ENCODE measurements at regions of chr11 and their contacts with region 1.

Region 1: GRCh38 chr11:269146-269890 is 8.9 kb upstream of the NLRP6 start:
- DNase-seq: peak; percentile 53
- H3K4me3 Mint-ChIP-seq: peak overlapping the region; percentile 88
- H3K27ac Mint-ChIP-seq: peak overlapping the region; percentile 97
- H3K4me1 Mint-ChIP-seq: peaks cover 31% of the 10 kb centered on the region
- H3K27me3 Mint-ChIP-seq: peaks cover 6% of the 10 kb centered on the region

Region 2: DNA sequence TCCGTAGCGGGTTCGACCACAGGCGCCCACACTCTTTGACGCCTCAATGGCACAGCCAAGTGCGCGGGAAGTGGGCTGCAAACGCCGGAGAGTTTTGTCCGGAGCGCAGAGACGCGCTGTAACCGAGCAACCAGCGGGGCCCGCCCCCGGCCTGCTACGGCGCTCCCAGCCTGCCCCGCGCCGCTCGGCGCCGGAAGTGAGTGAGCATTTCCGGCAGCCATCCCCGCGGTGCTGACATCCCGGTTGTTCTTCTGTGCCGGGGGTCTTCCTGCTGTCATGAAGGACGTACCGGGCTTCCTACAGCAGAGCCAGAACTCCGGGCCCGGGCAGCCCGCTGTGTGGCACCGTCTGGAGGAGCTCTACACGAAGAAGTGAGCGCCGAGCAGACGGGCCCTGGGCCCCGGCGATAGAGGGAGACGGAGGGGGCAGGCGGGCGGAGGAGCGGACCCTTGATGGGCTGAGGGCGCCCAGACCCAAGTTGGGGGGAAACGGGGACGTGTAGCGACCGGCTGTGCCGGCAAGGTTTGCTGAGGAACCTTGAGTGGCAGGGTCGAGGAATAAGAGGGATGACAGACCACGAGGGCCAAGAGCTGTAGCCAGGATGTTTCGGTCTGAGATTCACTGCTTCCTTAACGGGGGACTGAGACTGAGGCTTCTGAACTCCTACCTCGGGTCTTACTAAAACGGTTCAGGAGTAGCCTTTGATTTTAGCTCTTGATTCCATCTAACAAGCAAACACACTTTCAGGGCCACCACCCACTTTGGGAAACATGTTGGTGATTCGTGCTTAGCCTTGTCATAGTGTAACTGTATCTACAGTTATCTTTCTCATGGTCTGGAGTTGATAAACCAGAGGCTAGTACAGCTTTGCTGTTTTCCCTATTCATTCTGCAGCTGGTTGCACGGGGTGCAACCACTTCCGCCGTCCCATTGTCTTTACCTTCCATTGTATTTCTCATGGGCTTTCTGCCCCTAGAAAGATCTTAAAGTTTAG is 32.2 kb before region 1 on chr11 and contains the start of gene PSMD13:
- intact Hi-C with region 1: loop called (anchors 1 kb)
- DNase-seq: peak; percentile 84
- H3K4me3 Mint-ChIP-seq: peak within 1 kb of the TSS; percentile 97
- H3K27ac Mint-ChIP-seq: peak within 1 kb of the TSS; percentile 98
- H3K4me1 Mint-ChIP-seq: peaks cover 46% of the 10 kb centered on the region
- H3K27me3 Mint-ChIP-seq: peaks cover 2% of the 10 kb centered on the region
- total RNA-seq, gene PSMD13: 261 and 266 TPM in 2 replicates

Region 3: DNA sequence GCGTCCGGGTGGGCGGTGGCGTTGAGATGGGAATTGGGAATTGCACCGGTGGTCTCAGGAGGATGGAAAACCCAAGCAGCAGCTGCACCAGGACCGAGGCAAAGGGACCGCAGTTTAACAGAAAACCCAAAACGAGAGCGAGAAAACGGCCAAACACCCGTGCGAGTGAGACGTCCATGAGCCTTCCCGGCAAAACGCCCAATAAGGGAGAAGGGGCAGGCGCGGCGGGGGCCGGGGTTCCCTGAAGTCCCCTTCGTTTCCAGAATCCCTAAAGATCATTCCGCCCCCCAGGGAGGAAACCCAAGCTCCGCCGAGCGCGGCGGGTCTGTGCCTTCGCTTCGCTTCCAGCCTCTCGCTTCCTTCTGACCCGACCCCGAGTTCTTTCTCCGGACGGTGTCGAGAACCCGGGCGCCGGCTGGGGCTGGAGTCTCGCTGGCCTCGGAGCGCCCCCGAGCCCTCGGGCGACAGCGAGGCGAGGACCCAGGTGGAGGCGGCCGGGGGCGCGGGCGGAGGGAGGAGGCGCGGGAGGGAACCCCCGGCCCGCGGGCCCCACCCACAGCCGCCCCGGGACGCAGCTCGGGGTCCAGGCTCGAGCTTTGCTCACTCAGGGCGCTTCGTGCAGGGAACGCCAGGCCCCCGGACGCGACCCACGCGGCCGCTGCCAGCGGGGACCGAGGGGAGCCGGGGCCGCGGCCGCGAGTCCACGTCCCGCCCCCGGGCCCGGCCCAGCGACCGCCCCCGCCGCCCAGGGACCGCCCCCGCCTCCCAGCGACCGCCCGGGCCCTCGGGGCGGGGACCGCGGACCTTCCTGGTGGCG is 19.2 kb after region 1 on chr11 and contains the start of gene PGGHG:
- intact Hi-C with region 1: loop called (anchors 2 kb)
- DNase-seq: peak; percentile 68
- H3K4me3 Mint-ChIP-seq: peak within 1 kb of the TSS; percentile 95
- H3K27ac Mint-ChIP-seq: peak within 1 kb of the TSS; percentile 98
- H3K4me1 Mint-ChIP-seq: peaks cover 37% of the 10 kb centered on the region
- H3K27me3 Mint-ChIP-seq: peaks cover 6% of the 10 kb centered on the region
- total RNA-seq, gene PGGHG: 164 and 167 TPM in 2 replicates

Region 4: GRCh38 chr11:355581-356458 is 86.5 kb after region 1 on chr11:
- intact Hi-C with region 1: loop called (anchors 1 kb)
- DNase-seq: peak; percentile 85
- H3K4me3 Mint-ChIP-seq: peak overlapping the region; percentile 86
- H3K27ac Mint-ChIP-seq: peak overlapping the region; percentile 93
- H3K4me1 Mint-ChIP-seq: peaks cover 26% of the 10 kb centered on the region
- H3K27me3 Mint-ChIP-seq: peaks cover 4% of the 10 kb centered on the region

Region 5: GRCh38 chr11:447923-448731 is 178.8 kb after region 1 on chr11:
- intact Hi-C with region 1: loop called (anchors 2 kb)
- DNase-seq: peak; percentile 92
- H3K4me3 Mint-ChIP-seq: peak overlapping the region; percentile 88
- H3K27ac Mint-ChIP-seq: peak overlapping the region; percentile 91
- H3K4me1 Mint-ChIP-seq: peaks cover 16% of the 10 kb centered on the region
- H3K27me3 Mint-ChIP-seq: no peaks in the 10 kb centered on the region

Region 6: DNA sequence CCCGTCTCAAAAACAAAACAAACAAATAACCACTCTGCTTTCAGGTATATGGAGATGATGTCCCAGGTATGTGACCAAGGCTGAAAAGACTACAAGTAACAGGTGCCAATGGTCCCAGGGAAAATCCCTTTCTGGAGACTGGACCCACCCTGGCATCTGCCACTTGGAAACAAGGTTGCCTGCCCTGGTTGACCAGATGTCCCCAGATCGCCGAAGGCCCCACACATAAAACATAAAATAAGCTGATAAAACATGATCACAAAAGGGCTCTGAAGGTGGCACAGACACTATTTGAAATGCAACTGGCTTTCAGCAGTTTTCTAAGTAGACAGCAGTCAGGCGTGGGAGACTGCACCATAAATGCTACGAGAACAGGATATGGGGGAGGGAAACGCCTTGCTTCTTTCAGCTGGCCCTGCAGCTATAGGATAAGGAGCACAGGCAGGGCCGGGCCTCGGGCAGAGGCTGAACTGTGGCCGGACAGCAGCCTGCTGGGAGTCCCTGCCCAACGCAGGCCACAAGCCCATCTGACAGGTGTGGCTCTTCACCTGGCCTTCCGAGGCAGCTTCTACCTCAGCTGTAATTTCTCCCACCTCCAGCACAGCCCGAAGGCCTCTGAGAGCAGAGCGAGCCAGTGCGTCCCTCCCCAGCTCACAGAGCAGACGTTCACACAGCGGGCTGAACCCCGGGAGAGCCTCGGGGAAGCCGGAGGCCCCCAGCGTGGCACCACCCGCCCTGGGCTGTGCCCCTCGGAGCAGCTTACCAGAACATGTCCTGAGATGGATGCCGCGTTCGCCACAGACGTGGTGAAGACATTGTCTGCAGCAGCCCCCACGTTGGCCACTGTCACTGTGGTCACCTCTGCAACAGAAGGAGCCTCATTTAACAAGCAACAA is 421.7 kb after region 1 on chr11:
- intact Hi-C with region 1: no loop called
- DNase-seq: no peak
- H3K4me3 Mint-ChIP-seq: peak overlapping the region; percentile 30
- H3K27ac Mint-ChIP-seq: peak overlapping the region; percentile 67
- H3K4me1 Mint-ChIP-seq: peaks cover 32% of the 10 kb centered on the region
- H3K27me3 Mint-ChIP-seq: peaks cover 2% of the 10 kb centered on the region

Region 7: GRCh38 chr11:798093-798713 is 528.9 kb after region 1 on chr11 and contains the start of gene SLC25A22:
- intact Hi-C with region 1: loop called (anchors 5 kb)
- DNase-seq: peak; percentile 84
- H3K4me3 Mint-ChIP-seq: peak within 1 kb of the TSS; percentile 93
- H3K27ac Mint-ChIP-seq: peak within 1 kb of the TSS; percentile 82
- H3K4me1 Mint-ChIP-seq: peaks cover 4% of the 10 kb centered on the region
- H3K27me3 Mint-ChIP-seq: no peaks in the 10 kb centered on the region
- total RNA-seq, gene SLC25A22: 87.6 and 92.0 TPM in 2 replicates

Measured in activated T-helper 1 cell treated with anti-CD3 and anti-CD28 coated beads, Interleukin-12 subunit alpha, Interleukin-12 subunit beta, Interleukin-2, Interleukin-4 antibody, amounts not matched to agents 30 ng/mL and 10 ng/mL and 1 ng/mL, durations not matched to agents 14 hours and 24 hours and 36 hours (primary cell).